ENCODE measurements at regions of chr3 and their contacts with region 1.

Region 1: DNA sequence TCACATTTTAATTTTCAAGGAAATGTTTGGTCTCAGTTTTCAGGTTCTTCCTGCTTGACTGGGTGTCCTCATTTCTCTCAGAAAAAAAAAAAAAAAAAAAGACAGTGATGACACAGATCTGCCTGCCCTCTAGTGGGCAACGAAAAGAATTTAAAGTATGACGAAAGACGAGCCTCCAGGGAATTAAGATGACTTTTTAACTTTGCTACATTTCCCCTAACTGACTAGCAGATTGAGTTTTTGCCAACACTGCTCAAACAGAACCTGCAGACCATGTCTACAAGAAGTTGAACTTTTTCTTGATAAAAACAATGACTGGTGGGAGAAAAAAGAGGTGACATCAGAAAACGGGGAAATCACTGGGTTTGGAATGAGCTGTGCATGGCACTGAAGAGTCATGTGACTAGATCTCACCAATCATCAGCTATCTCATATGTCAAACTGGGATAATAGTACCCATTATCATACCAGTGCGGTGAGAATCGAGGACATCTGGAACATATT is 40.8 kb downstream of the EOMES start:
- DNase-seq: peak; percentile 56
- ATAC-seq: peak; percentile 80
- H3K4me3 Mint-ChIP-seq: peak overlapping the region; percentile 54
- H3K27ac Mint-ChIP-seq: peak overlapping the region; percentile 35
- H3K4me1 Mint-ChIP-seq: peaks cover 10% of the 10 kb centered on the region
- H3K27me3 Mint-ChIP-seq: peaks cover 9% of the 10 kb centered on the region

Region 2: GRCh38 chr3:27312044-27312668 is 369.1 kb before region 1 on chr3:
- CTCF ChIA-PET with region 1: interaction called, 19 read pairs
- POLR2A ChIA-PET with region 1: no interaction called
- DNase-seq: peak; percentile 22
- ATAC-seq: peak; percentile 64
- H3K4me3 Mint-ChIP-seq: no peak overlapping the region
- H3K27ac Mint-ChIP-seq: no peak overlapping the region
- H3K4me1 Mint-ChIP-seq: no peaks in the 10 kb centered on the region
- H3K27me3 Mint-ChIP-seq: peaks cover 6% of the 10 kb centered on the region

Region 3: GRCh38 chr3:27666272-27666671 is 15.0 kb before region 1 on chr3:
- CTCF ChIA-PET with region 1: interaction called, 16 read pairs
- POLR2A ChIA-PET with region 1: no interaction called
- DNase-seq: no peak
- ATAC-seq: no peak
- H3K4me3 Mint-ChIP-seq: no peak overlapping the region
- H3K27ac Mint-ChIP-seq: no peak overlapping the region
- H3K4me1 Mint-ChIP-seq: peaks cover 9% of the 10 kb centered on the region
- H3K27me3 Mint-ChIP-seq: peaks cover 4% of the 10 kb centered on the region

Measured in activated CD8-positive, alpha-beta T cell treated with anti-CD3 and anti-CD28 coated beads, Interleukin-2, amount 10 ng/mL, durations not matched to agents 7 days and 5 days (primary cell).